ENCODE measurements at regions of chr1 and their contacts with region 1.

Region 1: DNA sequence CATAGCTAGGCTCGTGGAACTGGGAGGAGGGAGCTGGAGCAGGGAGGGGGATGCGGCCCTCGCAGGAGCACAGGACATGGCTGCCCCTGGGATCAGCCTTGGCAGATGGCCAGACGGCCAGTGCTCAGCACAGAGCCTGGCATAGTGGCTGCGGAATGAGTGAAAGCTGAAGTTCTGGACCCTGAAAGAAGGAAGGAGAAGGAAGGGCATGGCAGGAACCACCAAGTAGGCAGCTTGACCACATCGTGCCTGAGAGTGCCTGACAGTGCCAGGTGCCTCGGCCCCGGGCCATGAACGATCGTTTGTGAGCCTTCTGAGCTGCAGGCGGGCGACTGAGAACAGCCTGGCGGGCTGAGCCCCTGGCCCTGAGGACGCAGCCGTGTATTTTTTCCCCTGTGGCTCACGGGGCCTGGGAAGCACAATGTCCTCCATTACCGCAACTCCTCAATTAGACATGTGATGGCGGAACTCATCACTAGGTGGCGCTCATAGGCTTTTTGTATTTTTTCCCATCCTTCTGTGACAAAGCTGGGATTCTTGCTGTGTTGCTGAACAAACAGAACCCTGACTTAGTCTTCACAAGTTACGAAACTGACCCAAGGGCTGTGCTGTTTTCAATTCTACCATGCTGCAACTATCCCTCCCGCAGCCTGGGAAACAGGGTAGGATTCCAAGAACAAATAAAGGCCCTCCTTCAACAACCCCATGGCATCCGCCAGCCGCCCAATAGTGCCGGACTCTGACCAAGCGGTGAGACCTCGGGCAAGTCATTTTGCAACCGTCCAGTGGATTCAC is 29.9 kb upstream of the TMEM61 start:
- DNase-seq: peak; percentile 50 to 93
- H3K4me3 ChIP-seq: peak overlapping the region in 2 of 4 experiments; percentile 10 to 26; a peak in 3 of 8 replicates
- H3K27ac ChIP-seq: no peak overlapping the region
- H3K4me1 ChIP-seq: peaks cover 4 to 7% (median 6%) of the 10 kb centered on the region in 4 experiments
- H3K27me3 ChIP-seq: no peaks in the 10 kb centered on the region
- CTCF ChIP-seq: peak; percentile 31 to 84 (median 80)
- EP300 ChIP-seq: no peak
- POLR2A ChIP-seq: peak in 1 of 2 experiments; percentile 40; a peak in 1 of 3 replicates
- RAD21 ChIP-seq: peak; percentile 86 to 87

Region 2: DNA sequence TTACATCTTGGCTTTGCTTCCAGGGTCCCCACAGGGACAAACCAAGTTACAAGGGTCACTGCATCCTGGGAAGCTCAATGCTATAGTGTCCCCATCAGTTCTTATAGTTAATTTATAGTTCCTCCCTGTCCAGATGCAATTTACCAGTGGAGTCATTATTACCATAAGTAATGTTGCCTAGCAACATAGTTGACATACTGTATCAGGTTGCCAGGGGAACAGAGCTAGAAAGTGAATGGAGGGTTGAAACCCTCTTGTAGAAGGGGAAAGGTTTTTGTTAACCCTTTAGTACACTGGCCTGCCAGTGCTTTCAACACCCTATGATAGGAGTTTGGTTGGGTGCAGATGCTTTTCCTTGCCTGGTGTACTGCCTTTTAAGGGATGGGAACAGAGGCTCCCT is 269.2 kb before region 1 on chr1:
- CTCF ChIA-PET with region 1: no interaction called
- POLR2A ChIA-PET with region 1: no interaction called
- DNase-seq: no peak
- H3K4me3 ChIP-seq: no peak overlapping the region
- H3K27ac ChIP-seq: no peak overlapping the region
- H3K4me1 ChIP-seq: peaks cover 0 to 9% (median 3%) of the 10 kb centered on the region in 4 experiments; a peak in 3 of 7 replicates
- H3K27me3 ChIP-seq: no peaks in the 10 kb centered on the region
- CTCF ChIP-seq: no peak
- EP300 ChIP-seq: no peak
- POLR2A ChIP-seq: no peak
- RAD21 ChIP-seq: no peak

Region 3: DNA sequence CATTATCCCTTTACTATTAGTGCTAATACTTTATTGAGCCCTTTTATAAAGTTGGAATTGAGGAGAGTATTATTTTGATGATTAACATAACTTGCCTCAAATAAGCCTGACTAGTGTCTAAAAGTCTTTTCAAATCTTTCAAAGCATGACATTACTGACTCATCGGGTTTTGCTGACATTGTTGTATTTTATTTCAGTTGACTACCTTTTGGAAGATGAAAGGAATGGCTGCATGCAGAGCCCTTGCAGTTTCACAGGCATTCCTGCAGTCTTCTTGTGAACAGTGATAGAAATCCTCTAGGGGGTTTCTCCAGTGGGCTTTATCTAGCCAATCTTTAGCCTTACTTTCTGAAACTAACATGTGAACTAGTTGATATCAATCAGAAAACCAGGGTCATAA is 13.1 kb before region 1 on chr1:
- CTCF ChIA-PET with region 1: interaction called, 36 read pairs
- POLR2A ChIA-PET with region 1: interaction called, 5 read pairs
- DNase-seq: no peak
- H3K4me3 ChIP-seq: no peak overlapping the region
- H3K27ac ChIP-seq: no peak overlapping the region
- H3K4me1 ChIP-seq: peaks cover 0 to 4% (median 2%) of the 10 kb centered on the region in 4 experiments; a peak in 3 of 7 replicates
- H3K27me3 ChIP-seq: no peaks in the 10 kb centered on the region
- CTCF ChIP-seq: no peak
- EP300 ChIP-seq: no peak
- POLR2A ChIP-seq: no peak
- RAD21 ChIP-seq: no peak

Region 4: GRCh38 chr1:54965624-54966340 is 15.2 kb after region 1 on chr1:
- CTCF ChIA-PET with region 1: interaction called, 31 read pairs
- POLR2A ChIA-PET with region 1: interaction called, 3 read pairs
- DNase-seq: no peak
- H3K4me3 ChIP-seq: no peak overlapping the region
- H3K27ac ChIP-seq: no peak overlapping the region
- H3K4me1 ChIP-seq: peaks cover 0 to 14% (median 11%) of the 10 kb centered on the region in 4 experiments; a peak in 5 of 7 replicates
- H3K27me3 ChIP-seq: no peaks in the 10 kb centered on the region
- CTCF ChIP-seq: no peak
- EP300 ChIP-seq: no peak
- POLR2A ChIP-seq: no peak
- RAD21 ChIP-seq: no peak

Region 5: GRCh38 chr1:54973205-54973921 is 22.8 kb after region 1 on chr1:
- CTCF ChIA-PET with region 1: interaction called, 436 read pairs
- POLR2A ChIA-PET with region 1: interaction called, 3 read pairs
- DNase-seq: no peak
- H3K4me3 ChIP-seq: no peak overlapping the region
- H3K27ac ChIP-seq: no peak overlapping the region
- H3K4me1 ChIP-seq: peaks cover 0 to 4% (median under 1%) of the 10 kb centered on the region in 4 experiments; a peak in 4 of 7 replicates
- H3K27me3 ChIP-seq: no peaks in the 10 kb centered on the region
- CTCF ChIP-seq: peak; percentile 18 to 63 (median 50)
- EP300 ChIP-seq: no peak
- POLR2A ChIP-seq: no peak
- RAD21 ChIP-seq: peak; percentile 45 to 53; a peak in 3 of 4 replicates

Region 6: DNA sequence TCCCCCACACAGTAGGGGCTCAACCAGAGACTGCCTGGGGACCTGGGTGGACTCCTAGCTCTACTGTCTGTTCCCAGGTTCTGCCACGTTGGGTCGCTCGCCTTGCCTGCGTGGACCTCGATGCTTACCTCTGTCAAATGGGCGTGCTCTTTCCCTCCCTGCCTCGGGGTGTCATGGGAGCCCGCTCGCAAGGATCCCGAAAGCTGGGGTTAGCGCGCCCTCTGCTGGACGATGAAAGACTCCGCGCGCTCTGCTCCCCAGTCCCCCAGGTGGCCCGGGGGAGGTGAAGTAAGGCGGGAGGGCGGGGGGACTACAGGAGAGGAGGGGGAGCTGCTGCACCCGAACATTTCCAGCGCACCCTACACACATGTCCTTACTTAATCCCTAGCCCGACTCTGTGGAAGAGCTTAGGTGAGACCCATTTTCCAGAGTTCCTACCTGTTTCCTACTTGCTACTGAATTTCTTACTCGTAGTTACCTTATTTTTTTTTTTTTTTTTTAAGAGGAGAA is 45.8 kb after region 1 on chr1:
- CTCF ChIA-PET with region 1: interaction called, 511 read pairs
- POLR2A ChIA-PET with region 1: interaction called, 13 read pairs
- DNase-seq: peak; percentile 61 to 96
- H3K4me3 ChIP-seq: peak overlapping the region; percentile 12 to 65 (median 50); a peak in 7 of 8 replicates
- H3K27ac ChIP-seq: no peak overlapping the region
- H3K4me1 ChIP-seq: peaks cover 16 to 30% (median 23%) of the 10 kb centered on the region in 4 experiments
- H3K27me3 ChIP-seq: peaks cover 4 to 45% (median 38%) of the 10 kb centered on the region in 4 experiments
- CTCF ChIP-seq: peak; percentile 78 to 95 (median 82)
- EP300 ChIP-seq: no peak
- POLR2A ChIP-seq: no peak
- RAD21 ChIP-seq: peak; percentile 95 to 98

Region 7: DNA sequence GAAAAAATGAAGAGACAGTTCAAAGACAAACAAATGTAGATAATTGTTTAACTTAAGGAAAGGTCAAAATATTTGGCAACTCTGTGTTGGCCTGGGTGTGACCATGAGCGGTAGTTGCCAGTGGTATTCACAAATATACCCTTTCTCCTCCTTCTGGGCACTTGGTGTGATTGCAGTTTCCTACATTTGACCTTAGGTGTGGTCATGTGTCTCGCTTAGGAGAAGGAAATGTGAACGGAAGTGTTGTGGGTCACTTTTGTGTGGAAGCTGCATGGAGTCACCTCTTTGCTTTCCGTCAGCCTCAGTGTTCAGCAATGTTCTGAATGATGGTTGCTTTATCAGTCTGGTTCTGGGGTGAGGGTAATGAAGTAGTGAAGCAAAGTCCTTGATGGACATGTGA is 85.3 kb after region 1 on chr1:
- CTCF ChIA-PET with region 1: interaction called, 50 read pairs
- POLR2A ChIA-PET with region 1: no interaction called
- DNase-seq: no peak
- H3K4me3 ChIP-seq: no peak overlapping the region
- H3K27ac ChIP-seq: no peak overlapping the region
- H3K4me1 ChIP-seq: peaks cover 0 to 13% (median 8%) of the 10 kb centered on the region in 4 experiments; a peak in 6 of 7 replicates
- H3K27me3 ChIP-seq: peaks cover 9 to 34% (median 33%) of the 10 kb centered on the region in 4 experiments
- CTCF ChIP-seq: peak in 2 of 3 experiments; percentile 29 to 36; a peak in 3 of 4 replicates
- EP300 ChIP-seq: no peak
- POLR2A ChIP-seq: no peak
- RAD21 ChIP-seq: peak; percentile 15 to 32; a peak in 2 of 4 replicates

Region 8: GRCh38 chr1:55050283-55050682 is 99.7 kb after region 1 on chr1:
- CTCF ChIA-PET with region 1: interaction called, 31 read pairs
- POLR2A ChIA-PET with region 1: no interaction called
- DNase-seq: no peak
- H3K4me3 ChIP-seq: no peak overlapping the region
- H3K27ac ChIP-seq: no peak overlapping the region
- H3K4me1 ChIP-seq: no peaks in the 10 kb centered on the region
- H3K27me3 ChIP-seq: no peaks in the 10 kb centered on the region
- CTCF ChIP-seq: no peak
- EP300 ChIP-seq: no peak
- POLR2A ChIP-seq: no peak
- RAD21 ChIP-seq: no peak

Region 9: GRCh38 chr1:55117941-55118340 is 167.4 kb after region 1 on chr1:
- CTCF ChIA-PET with region 1: no interaction called
- POLR2A ChIA-PET with region 1: no interaction called
- DNase-seq: no peak
- H3K4me3 ChIP-seq: no peak overlapping the region
- H3K27ac ChIP-seq: no peak overlapping the region
- H3K4me1 ChIP-seq: no peaks in the 10 kb centered on the region
- H3K27me3 ChIP-seq: no peaks in the 10 kb centered on the region; a peak in 1 of 7 replicates
- CTCF ChIP-seq: no peak
- EP300 ChIP-seq: no peak
- POLR2A ChIP-seq: no peak
- RAD21 ChIP-seq: no peak